ENCODE measurements at regions of chrX and their contacts with region 1.

Region 1: GRCh38 chrX:109847257-109848187 is 114.5 kb upstream of the ACSL4 start:
- DNase-seq: peak in 1 of 4 experiments; percentile 14
- ATAC-seq: no peak
- H3K4me3 ChIP-seq: no peak overlapping the region
- H3K27ac ChIP-seq: no peak overlapping the region; the same call in 2 of the 3 replicates
- H3K4me1 ChIP-seq: peaks cover 4 to 13% of the 10 kb centered on the region in 2 experiments; a peak in 3 of 5 replicates
- H3K27me3 ChIP-seq: no peaks in the 10 kb centered on the region
- CTCF ChIP-seq: no peak
- EP300 ChIP-seq: 0 out of 2 replicates have a peak, but pooled peaks have one; percentile 10
- POLR2A ChIP-seq: no peak
- RAD21 ChIP-seq: no peak

Region 2: DNA sequence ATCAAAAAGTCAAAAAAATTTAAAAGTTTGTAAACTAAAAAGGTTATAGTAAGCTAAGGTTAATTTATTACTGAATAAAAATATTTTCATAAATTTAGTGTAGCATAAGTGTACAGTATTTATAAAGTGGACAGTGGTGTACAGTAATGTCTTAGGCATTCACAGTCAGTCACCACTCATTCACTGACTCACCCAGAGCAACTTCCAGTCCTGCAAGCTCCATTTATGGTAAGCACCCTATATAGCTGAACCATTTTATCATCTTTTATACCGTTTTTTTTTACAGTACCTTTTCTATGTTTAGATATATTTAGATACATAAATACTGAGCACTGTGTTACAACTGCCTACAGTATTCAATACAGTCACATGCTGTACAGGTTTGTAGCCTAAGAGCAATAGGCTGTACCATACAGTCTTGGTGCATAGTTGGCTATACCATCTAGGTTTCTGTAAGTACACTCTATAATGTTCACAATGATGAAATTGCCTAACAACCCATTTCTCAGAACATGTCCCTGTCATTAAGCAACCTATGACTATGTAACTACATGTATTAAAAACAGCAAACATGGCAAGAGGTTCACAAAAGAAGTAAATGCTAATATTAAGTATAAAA is 133.1 kb before region 1 on chrX:
- CTCF ChIA-PET with region 1: interaction called, 3 read pairs
- POLR2A ChIA-PET with region 1: interaction called, 3 read pairs
- in situ Hi-C with region 1: loop called (anchors 5 kb)
- intact Hi-C with region 1: no loop called
- DNase-seq: no peak
- ATAC-seq: no peak; the same call in 2 of the 3 replicates
- H3K4me3 ChIP-seq: no peak overlapping the region
- H3K27ac ChIP-seq: no peak overlapping the region
- H3K4me1 ChIP-seq: no peaks in the 10 kb centered on the region; a peak in 2 of 5 replicates
- H3K27me3 ChIP-seq: no peaks in the 10 kb centered on the region
- CTCF ChIP-seq: no peak
- EP300 ChIP-seq: no peak
- POLR2A ChIP-seq: no peak
- RAD21 ChIP-seq: no peak